MCF 10A (cell line): ENCODE measurements at regions of chr5 and their contacts with region 1.

Region 1: DNA sequence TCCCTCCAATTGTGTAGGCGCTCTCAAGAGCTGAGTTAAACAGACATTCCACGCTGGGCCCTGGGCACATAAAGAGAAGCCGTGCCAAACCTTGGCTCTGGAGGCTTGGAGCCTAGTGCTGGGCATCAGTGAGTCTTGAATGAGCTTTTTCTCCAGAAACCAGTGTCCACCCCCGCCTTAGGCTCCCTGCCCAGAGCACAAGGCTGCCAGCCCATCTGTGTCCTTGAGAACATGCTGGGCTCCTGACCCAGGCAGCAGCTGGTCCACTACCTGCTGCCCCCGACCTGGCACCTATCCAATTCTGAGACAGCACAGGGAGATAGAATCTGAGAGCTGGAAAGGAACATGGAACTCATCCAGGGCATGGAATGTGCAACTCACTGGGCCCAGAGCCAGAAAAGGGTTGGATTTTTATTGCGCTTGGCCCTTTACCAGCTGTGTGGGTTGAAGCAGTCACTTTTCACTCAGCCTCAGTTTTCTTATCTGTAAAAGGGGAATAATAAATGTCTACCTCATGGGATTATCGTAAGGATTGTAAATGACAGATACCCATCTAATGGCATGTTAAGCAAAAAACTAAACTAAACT is 92.3 kb upstream of the CPLX2 start:
- DNase-seq: peak; percentile 99
- H3K4me3 Mint-ChIP-seq: no peak overlapping the region
- H3K27ac Mint-ChIP-seq: no peak overlapping the region
- H3K4me1 Mint-ChIP-seq: peaks cover 18% of the 10 kb centered on the region
- H3K27me3 Mint-ChIP-seq: peaks cover 21% of the 10 kb centered on the region
- CTCF ChIP-seq: no peak

Region 2: DNA sequence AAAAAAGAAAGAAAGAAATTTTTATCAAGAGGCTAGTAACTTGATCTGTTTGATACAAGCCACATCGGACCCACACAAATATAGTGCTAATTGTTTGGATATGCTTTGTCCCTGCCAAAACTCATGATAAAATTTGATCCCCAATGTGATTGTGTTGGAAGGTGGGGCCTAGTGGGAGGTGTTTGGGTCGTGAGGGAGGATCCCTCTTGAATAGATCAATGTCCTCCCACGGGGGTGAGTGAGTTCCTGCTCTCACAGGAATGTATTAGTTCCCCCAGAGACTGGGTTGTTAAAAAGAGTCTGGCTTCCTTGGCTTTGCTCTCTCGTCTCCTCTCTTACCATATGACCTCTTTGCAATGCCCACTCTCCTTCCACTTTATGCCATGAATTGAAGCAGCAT is 11.8 kb after region 1 on chr5:
- CTCF ChIA-PET with region 1: no interaction called
- POLR2A ChIA-PET with region 1: no interaction called
- intact Hi-C with region 1: no loop called
- DNase-seq: no peak
- H3K4me3 Mint-ChIP-seq: no peak overlapping the region
- H3K27ac Mint-ChIP-seq: no peak overlapping the region
- H3K4me1 Mint-ChIP-seq: peaks cover 12% of the 10 kb centered on the region
- H3K27me3 Mint-ChIP-seq: peaks cover 75% of the 10 kb centered on the region
- CTCF ChIP-seq: no peak

Region 3: DNA sequence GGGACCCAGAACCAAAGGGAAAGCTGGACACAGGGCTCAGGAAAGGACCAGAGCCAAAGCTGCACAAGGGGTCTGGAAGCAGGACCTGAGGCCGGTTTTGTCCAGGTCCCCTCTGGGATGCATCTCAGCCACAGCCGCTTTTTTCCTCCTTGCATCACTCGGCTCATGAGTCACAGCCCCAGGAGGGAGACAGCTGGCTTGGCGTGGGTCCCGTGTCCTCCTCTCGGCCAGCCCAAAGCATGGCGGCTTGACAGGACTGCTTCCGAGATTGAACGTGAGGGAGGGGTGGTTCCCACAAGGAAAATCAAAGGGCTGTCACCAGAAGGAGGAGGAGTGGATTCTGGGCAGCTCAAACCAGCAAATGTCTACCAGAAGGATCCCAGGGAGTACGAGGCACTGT is 35.6 kb after region 1 on chr5:
- CTCF ChIA-PET with region 1: interaction called, 3 read pairs
- POLR2A ChIA-PET with region 1: interaction called, 3 read pairs
- intact Hi-C with region 1: loop called (anchors 2 kb)
- DNase-seq: peak; percentile 95
- H3K4me3 Mint-ChIP-seq: no peak overlapping the region
- H3K27ac Mint-ChIP-seq: peak overlapping the region; percentile 81
- H3K4me1 Mint-ChIP-seq: peaks cover 38% of the 10 kb centered on the region
- H3K27me3 Mint-ChIP-seq: no peaks in the 10 kb centered on the region
- CTCF ChIP-seq: no peak

Region 4: DNA sequence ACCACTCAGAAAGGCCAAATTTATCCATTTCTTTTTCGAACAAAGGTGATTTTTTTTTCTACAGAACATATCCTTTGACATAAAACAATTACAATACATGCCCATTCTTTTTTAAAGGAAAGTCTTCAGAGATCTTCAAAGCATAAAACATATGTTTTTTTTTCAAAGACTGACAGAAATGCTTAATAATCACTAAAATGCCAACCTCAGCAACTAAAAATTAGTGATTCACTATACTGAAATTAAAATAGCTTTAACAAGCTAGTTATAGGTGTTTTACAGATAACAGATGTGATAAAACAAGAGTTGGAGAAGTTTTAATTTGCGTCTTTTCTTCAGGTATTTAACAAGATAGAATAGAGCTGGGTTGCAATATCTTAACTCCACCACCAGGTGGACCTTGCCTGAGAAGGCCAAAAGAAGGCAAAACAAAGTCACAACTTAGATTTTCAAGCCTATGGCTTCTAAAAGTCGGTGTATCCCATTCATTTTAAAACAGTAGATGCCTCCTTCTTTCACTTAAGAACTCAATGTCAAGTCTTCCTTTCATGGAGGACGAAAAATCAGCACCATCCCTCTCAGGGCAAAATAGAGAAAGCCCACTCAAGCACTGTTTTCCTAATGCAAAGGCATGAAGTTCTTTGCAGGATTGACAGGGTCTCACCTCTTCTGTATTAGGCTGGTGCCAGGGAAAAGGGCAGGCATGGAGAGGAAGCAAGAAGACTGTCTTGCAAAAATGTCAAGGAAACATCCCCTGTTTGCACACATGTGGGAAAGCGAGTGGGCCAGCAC is 61.2 kb after region 1 on chr5:
- CTCF ChIA-PET with region 1: no interaction called
- POLR2A ChIA-PET with region 1: no interaction called
- intact Hi-C with region 1: no loop called
- DNase-seq: peak; percentile 26
- H3K4me3 Mint-ChIP-seq: no peak overlapping the region
- H3K27ac Mint-ChIP-seq: no peak overlapping the region
- H3K4me1 Mint-ChIP-seq: peaks cover 10% of the 10 kb centered on the region
- H3K27me3 Mint-ChIP-seq: no peaks in the 10 kb centered on the region
- CTCF ChIP-seq: peak; percentile 51